Gastrocnemius medialis (tissue), 4 donors: ENCODE measurements at regions of chr2 and their contacts with region 1.

Region 1: GRCh38 chr2:178136321-178137025 is 24.2 kb downstream of the RBM45 start:
- DNase-seq: no peak
- ATAC-seq: no peak
- H3K4me3 ChIP-seq: no peak overlapping the region
- H3K27ac ChIP-seq: no peak overlapping the region
- H3K4me1 ChIP-seq: peaks cover 4% of the 10 kb centered on the region in 2 donors
- H3K27me3 ChIP-seq: no peaks in the 10 kb centered on the region
- CTCF ChIP-seq: no peak
- POLR2A ChIP-seq: no peak

Region 2: GRCh38 chr2:178397002-178397605 is 260.6 kb after region 1 on chr2:
- in situ Hi-C with region 1: loop called in 2 of 4 experiments (anchors 10 kb)
- intact Hi-C with region 1: no loop called
- DNase-seq: no peak
- ATAC-seq: peak; percentile 57 to 63
- H3K4me3 ChIP-seq: no peak overlapping the region
- H3K27ac ChIP-seq: no peak overlapping the region
- H3K4me1 ChIP-seq: no peaks in the 10 kb centered on the region
- H3K27me3 ChIP-seq: no peaks in the 10 kb centered on the region
- CTCF ChIP-seq: peak; percentile 35 to 70 (median 56)
- POLR2A ChIP-seq: no peak